Panc1 (cell line): ENCODE measurements at regions of chr4 and their contacts with region 1.

Region 1: DNA sequence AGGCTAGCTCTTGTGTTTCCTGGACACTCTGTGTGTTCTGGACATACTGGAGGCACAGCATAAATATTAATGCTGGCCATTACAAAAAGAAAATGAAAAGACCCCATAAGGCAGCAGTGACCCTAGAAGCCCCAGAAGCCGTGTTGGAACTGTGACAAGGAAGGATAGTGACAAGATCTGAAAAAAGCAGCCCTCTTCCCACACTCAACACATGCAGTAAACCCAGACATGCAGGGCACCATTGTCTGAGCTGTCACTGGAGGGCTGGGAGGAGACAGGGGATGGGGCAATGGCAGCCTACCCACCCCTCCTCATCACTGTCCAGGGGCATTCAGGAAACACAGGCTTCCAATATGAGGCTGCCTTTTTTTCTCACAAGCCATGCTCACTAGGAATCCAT is 6.5 kb downstream of the TRIM2 start:
- DNase-seq: no peak
- ATAC-seq: no peak
- H3K4me3 ChIP-seq: no peak overlapping the region
- H3K27ac ChIP-seq: no peak overlapping the region; the same call in 1 of the 2 replicates
- H3K4me1 ChIP-seq: peaks cover 11% of the 10 kb centered on the region
- H3K27me3 ChIP-seq: no peaks in the 10 kb centered on the region
- CTCF ChIP-seq: no peak

Region 2: GRCh38 chr4:151940926-151941617 is 1269.7 kb before region 1 on chr4:
- CTCF ChIA-PET with region 1: no interaction called
- POLR2A ChIA-PET with region 1: no interaction called
- in situ Hi-C with region 1: no loop called
- intact Hi-C with region 1: no loop called
- DNase-seq: no peak
- ATAC-seq: no peak
- H3K4me3 ChIP-seq: no peak overlapping the region
- H3K27ac ChIP-seq: no peak overlapping the region
- H3K4me1 ChIP-seq: no peaks in the 10 kb centered on the region
- H3K27me3 ChIP-seq: no peaks in the 10 kb centered on the region
- CTCF ChIP-seq: no peak

Region 3: DNA sequence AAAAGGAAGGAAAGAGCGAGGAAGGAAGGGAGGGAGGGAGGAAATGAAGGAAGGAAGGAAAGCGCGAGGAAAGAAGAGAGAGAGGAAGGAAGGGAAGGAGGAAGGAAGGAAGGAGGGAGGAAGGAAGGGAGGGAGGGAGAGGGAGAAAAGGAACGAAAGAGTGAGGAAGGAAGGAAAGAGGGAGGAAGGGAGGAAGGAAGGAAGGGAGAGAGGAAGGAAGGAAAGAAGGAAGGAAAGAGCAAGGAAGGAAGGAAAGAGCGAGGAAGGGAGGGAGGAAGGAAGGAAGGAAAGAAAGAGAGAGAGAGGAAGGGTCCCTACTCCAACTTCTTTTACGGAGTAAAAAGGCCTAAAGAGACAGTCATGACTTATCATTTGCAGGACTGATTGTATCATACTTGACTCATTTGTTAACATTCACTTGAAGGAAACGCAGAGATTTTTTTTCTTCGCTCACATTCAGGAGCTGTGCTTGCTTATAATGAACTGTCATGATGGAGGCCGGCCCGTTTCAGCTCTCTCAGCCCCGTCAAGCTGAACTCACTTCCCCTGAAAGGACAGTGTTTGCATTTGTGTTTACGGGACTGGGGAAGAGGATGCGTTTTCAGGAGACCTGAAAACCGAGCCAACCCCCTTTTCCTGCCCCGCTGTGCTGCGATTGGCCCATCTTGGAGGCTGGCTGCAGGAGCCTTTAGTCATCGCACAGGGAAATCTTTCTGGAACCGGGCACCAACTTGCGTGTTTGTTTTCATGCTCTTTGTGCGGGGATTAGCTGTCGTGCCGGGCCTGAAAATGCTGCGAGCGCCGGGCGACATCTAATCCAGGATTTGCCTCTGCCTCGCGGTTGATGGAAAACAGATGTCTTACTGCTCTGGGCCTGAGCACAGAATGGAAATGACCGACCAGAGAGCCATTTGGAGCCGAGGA is 11.3 kb after region 1 on chr4:
- CTCF ChIA-PET with region 1: no interaction called
- POLR2A ChIA-PET with region 1: interaction called, 10 read pairs
- in situ Hi-C with region 1: no loop called
- intact Hi-C with region 1: no loop called
- DNase-seq: no peak
- ATAC-seq: peak; percentile 89
- H3K4me3 ChIP-seq: peak overlapping the region; percentile 57 to 66
- H3K27ac ChIP-seq: peak overlapping the region; percentile 74
- H3K4me1 ChIP-seq: no peaks in the 10 kb centered on the region; the same call in 1 of the 2 replicates
- H3K27me3 ChIP-seq: no peaks in the 10 kb centered on the region
- CTCF ChIP-seq: no peak